AG04449 (cell line): ENCODE measurements at regions of chr10 and their contacts with region 1.

Region 1: DNA sequence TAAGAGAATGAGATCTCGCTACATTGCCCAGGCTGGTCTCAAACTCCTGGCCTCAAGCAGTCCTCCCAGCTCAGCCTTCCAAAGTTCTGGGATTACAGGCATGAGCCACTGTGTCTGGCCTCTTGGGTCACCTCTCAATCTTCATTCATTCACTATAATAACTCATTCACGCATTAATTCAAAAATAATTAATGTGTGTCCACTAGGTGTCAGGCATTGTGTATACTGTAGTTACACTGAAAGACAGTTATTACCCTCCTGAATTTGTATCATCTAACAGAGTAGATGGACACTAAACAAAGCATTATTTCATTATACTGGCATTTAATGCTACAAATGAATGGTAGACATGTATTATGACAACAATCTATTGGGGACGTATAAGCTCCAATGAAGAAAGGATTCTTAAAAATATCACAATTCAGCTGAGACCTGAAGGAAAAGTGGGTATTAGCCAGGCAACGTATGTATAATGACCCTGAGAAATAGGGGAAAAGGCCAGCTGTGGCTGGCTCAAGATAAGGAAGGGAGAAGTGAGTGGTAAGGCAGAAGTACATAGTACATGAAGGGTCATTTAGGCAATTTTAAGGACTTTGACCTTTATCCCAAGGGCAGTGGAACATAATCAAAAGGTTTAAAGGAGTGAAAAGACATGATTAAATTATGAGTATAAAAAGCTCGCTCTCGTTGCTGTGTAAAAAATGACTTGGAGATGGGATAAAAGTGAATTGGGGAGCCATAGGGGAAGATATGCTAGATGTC is 150.7 kb downstream of the BTAF1 start:
- DNase-seq: no peak
- H3K4me3 ChIP-seq: no peak overlapping the region
- CTCF ChIP-seq: no peak

Region 2: GRCh38 chr10:92011560-92012214 is 62.6 kb before region 1 on chr10:
- CTCF ChIA-PET with region 1: no interaction called
- POLR2A ChIA-PET with region 1: no interaction called
- DNase-seq: no peak
- H3K4me3 ChIP-seq: no peak overlapping the region
- CTCF ChIP-seq: no peak

Region 3: GRCh38 chr10:92432596-92432995 is 358.3 kb after region 1 on chr10:
- CTCF ChIA-PET with region 1: interaction called, 15 read pairs
- POLR2A ChIA-PET with region 1: no interaction called
- DNase-seq: no peak
- H3K4me3 ChIP-seq: no peak overlapping the region
- CTCF ChIP-seq: no peak